Left lung (tissue), 14 donors: ENCODE measurements at regions of chr2 and their contacts with region 1.

Region 1: DNA sequence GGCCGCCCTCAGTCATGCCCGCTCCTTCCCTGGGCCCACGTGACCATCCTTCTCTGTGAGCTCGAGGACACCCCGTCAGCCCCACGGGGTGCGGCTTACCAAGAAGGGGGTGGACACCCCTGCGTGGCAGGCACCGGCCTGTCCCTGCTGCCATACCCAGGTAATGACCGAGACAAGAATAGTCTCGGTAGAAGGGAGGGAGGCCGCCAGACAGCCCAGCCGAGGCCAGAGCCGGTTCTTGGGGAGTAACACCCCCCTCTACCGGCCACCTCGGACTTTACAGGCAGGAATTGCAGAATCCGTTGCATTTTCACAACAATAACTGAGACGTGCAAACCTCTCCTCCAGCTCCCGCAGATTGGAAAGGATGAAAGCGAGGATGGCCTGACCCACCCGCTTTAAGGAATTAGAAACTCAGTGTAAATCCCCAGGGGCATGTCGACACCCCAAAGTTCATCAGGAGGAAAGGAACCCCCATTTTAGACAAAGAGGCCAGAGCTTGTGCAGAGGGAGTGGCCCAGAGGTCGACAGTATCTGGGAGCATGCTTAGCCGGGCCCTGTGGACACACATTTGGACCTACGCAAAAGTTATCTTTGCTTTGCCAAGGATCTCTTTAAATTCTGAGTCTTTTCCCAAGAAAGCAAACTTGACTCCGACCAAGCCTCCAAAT is 60.1 kb upstream of the GLI2 start:
- DNase-seq: peak in 1 of 4 donors; percentile 83
- ATAC-seq: peak; percentile 89
- H3K4me3 ChIP-seq: no peak overlapping the region
- H3K27ac ChIP-seq: no peak overlapping the region
- H3K4me1 ChIP-seq: no peaks in the 10 kb centered on the region
- H3K27me3 ChIP-seq: peaks cover 0 to 70% of the 10 kb centered on the region in 2 donors
- CTCF ChIP-seq: peak; percentile 64 to 81

Region 2: GRCh38 chr2:120343433-120344105 is 332.0 kb before region 1 on chr2:
- intact Hi-C with region 1: loop called in 1 of 2 experiments (anchors 5 kb)
- DNase-seq: peak in 3 of 4 donors; percentile 81 to 95 (median 87)
- ATAC-seq: peak; percentile 86
- H3K4me3 ChIP-seq: peak overlapping the region in 1 of 2 donors; percentile 47
- H3K27ac ChIP-seq: no peak overlapping the region
- H3K4me1 ChIP-seq: peaks cover 19 to 70% of the 10 kb centered on the region in 2 donors
- H3K27me3 ChIP-seq: peaks cover 49 to 95% of the 10 kb centered on the region in 2 donors
- CTCF ChIP-seq: peak; percentile 72 to 74

Region 3: DNA sequence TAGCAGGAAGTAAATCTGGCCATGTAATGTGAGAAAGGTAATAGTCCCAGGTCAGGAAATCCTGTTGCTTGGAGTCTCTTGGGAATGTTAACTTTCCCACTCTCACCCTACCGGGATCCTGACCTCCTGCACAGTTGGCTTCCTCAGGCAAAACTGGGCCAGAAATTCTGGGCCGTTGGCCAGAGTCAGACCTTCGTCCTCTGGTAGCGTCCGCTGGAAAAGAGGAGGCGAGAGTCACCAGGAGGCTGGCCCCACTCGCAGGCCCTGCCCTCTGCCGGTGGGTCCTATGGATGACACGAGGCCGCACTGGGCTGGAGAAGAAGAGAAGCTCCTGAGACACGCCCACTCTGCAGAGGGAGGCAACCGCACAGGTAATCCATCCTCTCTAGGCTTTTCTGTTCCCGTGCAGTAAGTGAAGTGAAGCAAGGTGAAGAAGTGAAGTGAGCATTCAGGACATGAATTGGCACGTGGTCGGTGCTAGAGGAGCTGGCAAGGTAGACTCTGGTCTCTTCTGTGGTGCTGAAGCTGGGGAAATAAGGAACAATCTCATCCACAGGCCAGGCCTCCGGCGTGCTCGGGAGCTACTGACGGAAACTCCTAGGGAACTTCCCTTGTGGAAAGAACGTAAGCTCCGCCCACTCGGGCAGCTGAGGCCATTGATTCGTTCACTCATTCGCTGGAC is 122.7 kb before region 1 on chr2:
- intact Hi-C with region 1: no loop called
- DNase-seq: peak in 3 of 4 donors; percentile 61 to 90 (median 79)
- ATAC-seq: peak; percentile 98
- H3K4me3 ChIP-seq: no peak overlapping the region
- H3K27ac ChIP-seq: no peak overlapping the region
- H3K4me1 ChIP-seq: peaks cover 4 to 7% of the 10 kb centered on the region in 2 donors
- H3K27me3 ChIP-seq: no peaks in the 10 kb centered on the region
- CTCF ChIP-seq: peak; percentile 52 to 66

Region 4: GRCh38 chr2:120712180-120712681 is 36.6 kb after region 1 on chr2:
- intact Hi-C with region 1: no loop called
- DNase-seq: peak in 1 of 4 donors; percentile 66
- ATAC-seq: no peak
- H3K4me3 ChIP-seq: no peak overlapping the region
- H3K27ac ChIP-seq: no peak overlapping the region
- H3K4me1 ChIP-seq: no peaks in the 10 kb centered on the region
- H3K27me3 ChIP-seq: peaks cover 0 to 44% of the 10 kb centered on the region in 2 donors
- CTCF ChIP-seq: no peak